GM10248 (cell line): ENCODE measurements at regions of chr2 and their contacts with region 1.

Region 1: GRCh38 chr2:212777020-212777491 is 238.5 kb upstream of the ERBB4 start:
- DNase-seq: peak; percentile 25
- CTCF ChIP-seq: peak; percentile 39

Region 2: DNA sequence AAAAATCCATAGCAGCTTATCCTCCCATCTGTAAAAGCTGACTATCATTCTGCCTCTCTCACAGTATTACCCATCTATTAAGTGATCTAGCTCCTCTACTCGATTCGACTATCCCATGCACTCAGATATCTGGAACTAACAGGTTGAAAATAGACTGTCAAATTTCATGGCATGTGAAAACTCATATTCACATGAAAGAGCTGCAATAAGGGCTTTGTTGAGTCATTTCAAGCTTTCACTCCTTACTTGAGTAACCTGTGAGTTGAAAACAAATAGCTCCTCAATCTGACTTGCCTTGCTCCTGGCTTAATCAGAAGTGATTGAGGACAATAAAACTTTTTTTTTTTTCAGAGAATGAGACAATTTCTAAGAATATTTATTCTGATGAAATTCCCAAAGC is 46.1 kb before region 1 on chr2:
- CTCF ChIA-PET with region 1: interaction called, 10 read pairs
- POLR2A ChIA-PET with region 1: no interaction called
- DNase-seq: peak; percentile 55
- CTCF ChIP-seq: no peak

Region 3: DNA sequence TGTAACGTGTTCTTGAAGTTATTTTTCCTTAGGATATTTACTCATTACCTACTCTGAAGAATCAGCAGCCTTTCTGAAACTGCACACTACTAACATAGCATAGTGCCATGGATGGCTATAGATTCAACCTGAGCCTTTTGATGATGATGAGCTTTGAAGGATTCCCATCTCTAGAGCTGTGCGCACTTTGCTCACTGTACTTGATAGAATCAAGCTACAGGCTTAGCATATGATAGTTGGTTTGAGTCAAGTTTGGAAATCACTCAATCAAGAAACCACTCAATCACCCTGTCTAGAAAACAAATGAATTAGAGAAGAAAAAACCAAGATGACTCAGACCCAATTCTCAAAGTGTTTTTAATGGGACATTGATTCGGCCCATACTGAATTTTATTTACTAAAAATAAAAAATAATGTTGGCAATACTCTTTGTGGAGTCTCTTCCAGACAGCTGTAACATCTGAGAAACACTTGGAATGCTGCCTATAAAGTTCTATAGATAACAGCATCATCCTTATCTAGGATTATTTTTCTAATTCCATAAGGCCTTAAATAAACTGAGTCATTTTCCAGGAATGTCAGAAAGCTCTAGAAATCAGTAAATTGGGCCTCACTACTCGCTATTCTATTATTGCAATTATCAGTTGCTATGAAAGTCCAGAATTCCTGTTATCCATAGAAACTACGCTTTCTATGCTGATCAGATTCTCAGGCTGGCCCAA is 20.6 kb after region 1 on chr2:
- CTCF ChIA-PET with region 1: interaction called, 26 read pairs
- POLR2A ChIA-PET with region 1: no interaction called
- DNase-seq: no peak
- CTCF ChIP-seq: no peak

Region 4: DNA sequence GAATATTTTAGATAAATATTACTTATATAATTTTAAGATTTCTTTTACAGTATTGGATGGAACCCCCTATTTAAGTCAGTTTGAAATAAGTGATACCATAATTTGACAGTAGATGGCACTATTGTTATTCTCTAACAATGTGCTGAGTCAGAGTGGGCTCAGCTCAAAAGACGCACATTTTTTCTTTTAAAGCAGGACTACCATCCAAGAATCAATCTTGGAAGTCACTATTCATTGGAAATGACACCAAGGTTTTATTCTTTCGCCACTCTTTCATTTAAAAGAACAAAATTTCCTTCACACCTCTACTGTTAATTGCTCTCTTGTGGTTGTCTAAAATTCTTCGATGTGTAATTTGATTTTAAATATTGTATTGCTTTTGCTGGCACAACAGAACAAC is 474.6 kb after region 1 on chr2:
- CTCF ChIA-PET with region 1: no interaction called
- POLR2A ChIA-PET with region 1: no interaction called
- DNase-seq: peak; percentile 35
- CTCF ChIP-seq: peak; percentile 49

Region 5: GRCh38 chr2:214395040-214395439 is 1618.0 kb after region 1 on chr2:
- CTCF ChIA-PET with region 1: no interaction called
- POLR2A ChIA-PET with region 1: no interaction called
- DNase-seq: no peak
- CTCF ChIP-seq: no peak